CD8-positive, alpha-beta T cell (primary cell): ENCODE measurements at regions of chr11 and their contacts with region 1.

Region 1: GRCh38 chr11:72814286-72815109 is at the start of gene ATG16L2:
- DNase-seq: peak; percentile 83 to 96 (median 88)
- ATAC-seq: peak; percentile 78
- H3K4me3 ChIP-seq: peak within 1 kb of the TSS; percentile 97 to 98
- H3K4me3 Mint-ChIP-seq: peak within 1 kb of the TSS; percentile 99
- H3K27ac ChIP-seq: peak within 1 kb of the TSS; percentile 99 to 100
- H3K27ac Mint-ChIP-seq: peak within 1 kb of the TSS; percentile 99
- H3K4me1 ChIP-seq: peaks cover 26% of the 10 kb centered on the region
- H3K4me1 Mint-ChIP-seq: peaks cover 48% of the 10 kb centered on the region
- H3K27me3 ChIP-seq: no peaks in the 10 kb centered on the region
- H3K27me3 Mint-ChIP-seq: no peaks in the 10 kb centered on the region
- CTCF ChIP-seq: peak; percentile 20
- total RNA-seq, gene ATG16L2: 45.7 to 52.8 TPM

Region 2: DNA sequence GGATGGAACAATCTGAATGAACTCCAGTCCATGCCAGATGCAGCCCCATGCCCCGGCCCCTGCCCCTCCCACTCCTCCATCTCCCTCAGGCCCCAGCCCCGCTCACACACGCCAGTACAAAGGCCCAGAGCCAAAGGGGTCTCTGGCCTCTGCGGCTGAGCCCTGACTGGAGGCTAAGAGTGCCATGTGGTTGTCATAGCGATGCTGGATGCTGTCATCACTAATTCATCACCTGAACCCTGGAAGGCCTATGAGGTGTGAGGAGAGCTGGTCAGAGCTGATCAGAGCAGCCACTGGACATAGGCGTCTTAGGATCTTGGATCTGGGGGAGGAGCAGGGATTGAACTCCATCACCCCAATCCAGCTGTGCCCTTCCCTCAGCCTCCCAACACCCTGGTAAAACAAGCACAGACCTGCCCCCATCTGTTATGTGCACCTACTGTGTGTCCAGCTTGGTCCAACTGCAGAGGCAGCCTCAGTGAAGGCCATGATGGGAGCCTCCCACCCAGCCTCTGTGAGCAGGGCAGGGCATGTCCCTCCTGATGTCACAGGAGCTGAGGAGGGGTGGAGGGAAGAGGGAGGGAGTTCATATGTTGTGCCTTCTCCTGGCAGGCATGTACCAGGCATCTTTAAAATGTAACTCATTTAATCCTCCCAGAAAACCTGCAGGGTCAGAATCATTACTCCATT is 156.9 kb before region 1 on chr11:
- CTCF ChIA-PET with region 1: no interaction called
- POLR2A ChIA-PET with region 1: no interaction called
- intact Hi-C with region 1: no loop called
- DNase-seq: peak in 1 of 9 experiments; percentile 4
- ATAC-seq: no peak
- H3K4me3 ChIP-seq: no peak overlapping the region
- H3K4me3 Mint-ChIP-seq: no peak overlapping the region
- H3K27ac ChIP-seq: no peak overlapping the region
- H3K27ac Mint-ChIP-seq: no peak overlapping the region
- H3K4me1 ChIP-seq: no peaks in the 10 kb centered on the region
- H3K4me1 Mint-ChIP-seq: no peaks in the 10 kb centered on the region
- H3K27me3 ChIP-seq: no peaks in the 10 kb centered on the region
- H3K27me3 Mint-ChIP-seq: peaks cover 12% of the 10 kb centered on the region
- CTCF ChIP-seq: no peak

Region 3: GRCh38 chr11:72736452-72737069 is 77.9 kb before region 1 on chr11:
- CTCF ChIA-PET with region 1: interaction called, 4 read pairs
- POLR2A ChIA-PET with region 1: interaction called, 3 read pairs
- intact Hi-C with region 1: loop called in 1 of 2 experiments (anchors 1 kb)
- DNase-seq: peak; percentile 50 to 95 (median 75)
- ATAC-seq: peak; percentile 89
- H3K4me3 ChIP-seq: no peak overlapping the region
- H3K4me3 Mint-ChIP-seq: peak overlapping the region; percentile 47
- H3K27ac ChIP-seq: peak overlapping the region; percentile 60 to 96
- H3K27ac Mint-ChIP-seq: peak overlapping the region; percentile 99
- H3K4me1 ChIP-seq: peaks cover 53% of the 10 kb centered on the region
- H3K4me1 Mint-ChIP-seq: peaks cover 56% of the 10 kb centered on the region
- H3K27me3 ChIP-seq: no peaks in the 10 kb centered on the region
- H3K27me3 Mint-ChIP-seq: no peaks in the 10 kb centered on the region
- CTCF ChIP-seq: no peak

Region 4: DNA sequence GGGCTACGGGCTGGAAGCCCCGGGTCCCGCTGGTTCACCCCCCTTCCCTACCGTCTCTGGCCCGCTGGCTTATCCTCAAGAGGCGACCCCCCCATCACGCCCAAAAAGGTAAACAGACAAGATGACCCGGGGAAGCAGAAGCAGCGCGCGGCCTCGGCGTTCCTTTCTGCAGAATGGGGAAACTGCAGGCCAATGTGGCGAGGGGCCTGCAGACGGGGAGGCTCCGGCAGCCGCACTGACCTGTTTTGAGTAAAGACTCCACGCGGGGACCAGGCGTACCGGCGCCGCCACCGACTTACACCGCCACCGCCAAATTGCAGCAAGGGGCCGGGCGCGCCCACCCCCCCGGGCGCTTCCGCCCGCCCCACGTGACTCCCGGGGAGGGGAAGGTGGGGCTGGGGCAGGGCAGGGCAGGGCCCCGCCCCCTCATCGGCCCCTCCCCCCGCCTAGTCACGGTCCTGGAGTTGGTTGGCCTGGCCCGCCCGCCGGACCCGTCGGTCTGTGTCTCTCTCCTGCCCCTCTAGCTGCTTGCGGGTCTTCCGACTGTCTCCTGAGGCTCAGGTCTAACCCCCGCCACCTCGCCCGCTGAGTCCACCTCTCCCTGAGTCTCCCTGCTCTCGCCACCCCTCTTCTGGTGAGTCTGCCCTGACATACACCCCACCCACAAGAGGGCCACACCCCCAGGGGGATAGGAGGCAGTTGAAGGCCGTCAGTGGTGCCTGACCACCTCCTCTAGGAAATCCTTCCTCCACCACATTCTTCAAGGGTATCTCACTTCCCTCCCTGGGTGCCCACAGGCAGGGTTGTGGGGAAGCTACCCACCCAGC is 62.2 kb before region 1 on chr11 and contains the start of gene ARAP1:
- CTCF ChIA-PET with region 1: no interaction called
- POLR2A ChIA-PET with region 1: no interaction called
- intact Hi-C with region 1: loop called (anchors 1 kb)
- DNase-seq: peak; percentile 53 to 91 (median 80)
- ATAC-seq: peak; percentile 88
- H3K4me3 ChIP-seq: peak within 1 kb of the TSS; percentile 92 to 95
- H3K4me3 Mint-ChIP-seq: peak within 1 kb of the TSS; percentile 95
- H3K27ac ChIP-seq: peak within 1 kb of the TSS; percentile 68 to 70
- H3K27ac Mint-ChIP-seq: peak within 1 kb of the TSS; percentile 94
- H3K4me1 ChIP-seq: peaks cover 40% of the 10 kb centered on the region
- H3K4me1 Mint-ChIP-seq: peaks cover 45% of the 10 kb centered on the region
- H3K27me3 ChIP-seq: no peaks in the 10 kb centered on the region
- H3K27me3 Mint-ChIP-seq: no peaks in the 10 kb centered on the region
- CTCF ChIP-seq: no peak
- total RNA-seq, gene ARAP1: 93.5 to 95.2 TPM

Region 5: GRCh38 chr11:72781313-72782050 is 33.0 kb before region 1 on chr11:
- CTCF ChIA-PET with region 1: interaction called, 5 read pairs
- POLR2A ChIA-PET with region 1: interaction called, 3 read pairs
- intact Hi-C with region 1: loop called (anchors 1 kb)
- DNase-seq: peak; percentile 34 to 87 (median 66)
- ATAC-seq: peak; percentile 86
- H3K4me3 ChIP-seq: peak overlapping the region; percentile 42 to 59
- H3K4me3 Mint-ChIP-seq: peak overlapping the region; percentile 72
- H3K27ac ChIP-seq: no peak overlapping the region
- H3K27ac Mint-ChIP-seq: peak overlapping the region; percentile 50
- H3K4me1 ChIP-seq: peaks cover 16% of the 10 kb centered on the region
- H3K4me1 Mint-ChIP-seq: peaks cover 29% of the 10 kb centered on the region
- H3K27me3 ChIP-seq: no peaks in the 10 kb centered on the region
- H3K27me3 Mint-ChIP-seq: no peaks in the 10 kb centered on the region
- CTCF ChIP-seq: no peak

Region 6: GRCh38 chr11:72848846-72849466 is 34.5 kb after region 1 on chr11:
- CTCF ChIA-PET with region 1: interaction called, 5 read pairs
- POLR2A ChIA-PET with region 1: no interaction called
- intact Hi-C with region 1: loop called in 1 of 2 experiments (anchors 2 kb)
- DNase-seq: peak in 5 of 9 experiments; percentile 29 to 67 (median 46)
- ATAC-seq: peak; percentile 71
- H3K4me3 ChIP-seq: no peak overlapping the region
- H3K4me3 Mint-ChIP-seq: no peak overlapping the region
- H3K27ac ChIP-seq: no peak overlapping the region
- H3K27ac Mint-ChIP-seq: no peak overlapping the region
- H3K4me1 ChIP-seq: no peaks in the 10 kb centered on the region
- H3K4me1 Mint-ChIP-seq: peaks cover 5% of the 10 kb centered on the region
- H3K27me3 ChIP-seq: no peaks in the 10 kb centered on the region
- H3K27me3 Mint-ChIP-seq: no peaks in the 10 kb centered on the region
- CTCF ChIP-seq: peak; percentile 61

Region 7: DNA sequence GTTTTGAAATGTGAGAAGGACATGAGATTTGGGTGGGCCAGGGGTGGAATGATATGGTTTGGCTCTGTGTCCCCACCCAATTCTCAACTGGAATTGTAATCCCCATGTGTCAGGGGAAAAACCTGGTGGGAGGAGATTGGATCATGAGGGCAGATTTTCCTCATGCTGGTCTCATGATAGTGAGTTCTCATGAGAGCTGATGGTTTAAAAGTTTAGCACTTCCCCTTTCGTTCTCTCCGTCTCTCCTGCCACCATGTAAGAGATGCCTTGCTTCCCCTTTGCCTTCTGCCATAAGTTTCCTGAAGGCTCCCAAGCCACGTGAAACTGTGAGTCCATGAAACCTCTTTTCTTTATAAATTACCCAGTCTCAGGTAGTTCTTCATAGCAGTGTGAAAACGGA is 214.1 kb after region 1 on chr11:
- CTCF ChIA-PET with region 1: no interaction called
- POLR2A ChIA-PET with region 1: no interaction called
- intact Hi-C with region 1: no loop called
- DNase-seq: peak in 1 of 9 experiments; percentile 11
- ATAC-seq: no peak
- H3K4me3 ChIP-seq: no peak overlapping the region
- H3K4me3 Mint-ChIP-seq: no peak overlapping the region
- H3K27ac ChIP-seq: no peak overlapping the region
- H3K27ac Mint-ChIP-seq: no peak overlapping the region
- H3K4me1 ChIP-seq: peaks cover 19% of the 10 kb centered on the region
- H3K4me1 Mint-ChIP-seq: peaks cover 27% of the 10 kb centered on the region
- H3K27me3 ChIP-seq: no peaks in the 10 kb centered on the region
- H3K27me3 Mint-ChIP-seq: no peaks in the 10 kb centered on the region
- CTCF ChIP-seq: no peak